ENCODE measurements at regions of chr1 and their contacts with region 1.

Region 1: DNA sequence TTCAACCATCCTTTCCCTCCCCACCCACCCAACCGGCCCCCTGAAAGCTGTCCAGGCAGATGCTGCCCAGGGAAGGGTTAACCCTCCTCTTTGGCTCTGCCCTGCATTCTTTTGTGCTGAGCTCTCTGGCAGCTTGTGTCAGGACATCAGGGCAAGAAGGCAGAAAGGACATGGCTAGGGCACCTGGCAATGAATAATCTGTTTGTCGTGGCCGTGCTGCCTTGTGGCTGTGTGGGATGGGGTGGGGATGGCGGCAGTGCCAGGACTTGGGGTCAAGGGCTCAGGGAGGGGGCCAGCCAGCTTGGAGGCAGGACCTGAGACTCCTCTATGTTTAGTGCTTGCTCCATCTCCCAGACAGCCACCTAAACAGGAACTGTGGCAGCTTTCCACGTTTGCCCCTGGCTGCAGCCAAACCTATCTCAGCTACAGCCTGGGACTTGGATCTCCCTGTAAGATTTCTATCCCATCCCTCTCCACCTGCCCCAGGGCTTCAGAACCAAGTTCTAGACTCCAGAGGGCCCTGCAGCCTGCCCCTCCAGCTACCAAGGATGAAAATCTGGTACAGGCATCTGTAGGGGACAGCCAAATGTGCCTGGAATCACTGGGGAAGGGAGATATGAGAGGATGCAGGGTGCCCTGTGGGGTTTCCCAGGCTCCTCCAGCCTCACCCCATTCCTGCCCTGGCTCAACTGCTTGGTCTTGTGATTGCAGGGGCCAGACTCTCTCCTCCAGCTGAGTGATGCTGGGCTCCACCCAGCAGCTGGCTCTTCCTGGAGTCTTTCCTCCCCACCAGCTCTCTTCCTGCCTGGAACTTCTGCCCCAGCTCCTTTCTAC is 9.7 kb upstream of the GPR37L1 start:
- DNase-seq: peak; percentile 23 to 37
- H3K4me3 ChIP-seq: no peak overlapping the region
- H3K27ac ChIP-seq: peak overlapping the region in 2 of 3 donors; percentile 27 to 57
- H3K4me1 ChIP-seq: peaks cover 10 to 27% of the 10 kb centered on the region in 2 donors
- H3K27me3 ChIP-seq: no peaks in the 10 kb centered on the region
- CTCF ChIP-seq: no peak
- POLR2A ChIP-seq: no peak

Region 2: GRCh38 chr1:201859424-201859823 is 253.6 kb before region 1 on chr1:
- intact Hi-C with region 1: no loop called
- DNase-seq: no peak
- H3K4me3 ChIP-seq: no peak overlapping the region
- H3K27ac ChIP-seq: no peak overlapping the region
- H3K4me1 ChIP-seq: no peaks in the 10 kb centered on the region
- H3K27me3 ChIP-seq: no peaks in the 10 kb centered on the region
- CTCF ChIP-seq: no peak
- POLR2A ChIP-seq: no peak

Region 3: GRCh38 chr1:201895913-201896807 is 216.9 kb before region 1 on chr1:
- intact Hi-C with region 1: loop called (anchors 10 kb)
- DNase-seq: peak; percentile 87 to 90
- H3K4me3 ChIP-seq: no peak overlapping the region
- H3K27ac ChIP-seq: peak overlapping the region; percentile 31 to 96 (median 55)
- H3K4me1 ChIP-seq: peaks cover 22 to 29% of the 10 kb centered on the region in 2 donors
- H3K27me3 ChIP-seq: no peaks in the 10 kb centered on the region
- CTCF ChIP-seq: peak; percentile 78 to 98 (median 93)
- POLR2A ChIP-seq: peak in 1 of 2 donors; percentile 26

Measured in thyroid gland (tissue), 4 donors.